PC-3 (cell line): ENCODE measurements at regions of chr3 and their contacts with region 1.

Region 1: GRCh38 chr3:97882975-97883598 is 61.3 kb downstream of the CRYBG3 start:
- DNase-seq: peak; percentile 92
- ATAC-seq: peak; percentile 92
- H3K4me3 ChIP-seq: peak overlapping the region; percentile 54
- H3K27ac ChIP-seq: peak overlapping the region; percentile 90
- H3K4me1 ChIP-seq: peaks cover 26% of the 10 kb centered on the region
- H3K27me3 ChIP-seq: no peaks in the 10 kb centered on the region
- CTCF ChIP-seq: no peak

Region 2: DNA sequence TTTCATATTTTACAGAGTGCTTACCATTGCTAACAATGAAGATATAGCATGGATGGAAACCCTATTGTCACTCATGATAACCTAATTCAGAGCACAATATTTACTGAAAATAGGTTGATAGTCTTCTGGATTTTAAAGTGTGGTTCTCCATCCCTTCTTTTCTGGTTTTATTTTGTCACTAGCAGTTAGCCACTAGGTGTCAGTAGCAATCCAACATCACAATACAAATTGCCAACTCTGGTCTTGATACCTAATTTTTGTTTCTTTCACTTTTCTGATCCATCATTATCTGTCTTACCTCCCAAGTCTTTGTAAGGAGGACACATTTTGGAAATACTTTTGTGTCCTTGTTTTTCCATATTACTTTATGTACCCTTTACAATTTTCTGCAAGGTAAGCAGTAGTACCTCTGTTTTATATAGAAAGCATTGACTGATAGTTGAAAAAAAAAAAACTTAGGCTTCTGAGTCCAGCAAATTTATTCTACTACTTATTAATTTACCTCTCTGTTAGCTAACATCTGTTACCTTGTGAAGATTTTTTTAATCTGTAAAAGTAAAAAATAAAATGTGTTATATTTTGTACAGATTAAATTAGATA is 89.6 kb before region 1 on chr3:
- CTCF ChIA-PET with region 1: no interaction called
- POLR2A ChIA-PET with region 1: no interaction called
- intact Hi-C with region 1: loop called (anchors 5 kb)
- DNase-seq: peak; percentile 71
- ATAC-seq: peak; percentile 60
- H3K4me3 ChIP-seq: no peak overlapping the region
- H3K27ac ChIP-seq: no peak overlapping the region
- H3K4me1 ChIP-seq: no peaks in the 10 kb centered on the region
- H3K27me3 ChIP-seq: no peaks in the 10 kb centered on the region
- CTCF ChIP-seq: peak; percentile 92

Region 3: GRCh38 chr3:97821810-97822775 is 61.0 kb before region 1 on chr3 and contains the start of gene CRYBG3:
- CTCF ChIA-PET with region 1: no interaction called
- POLR2A ChIA-PET with region 1: no interaction called
- intact Hi-C with region 1: loop called (anchors 1 kb)
- DNase-seq: peak; percentile 86
- ATAC-seq: peak; percentile 94
- H3K4me3 ChIP-seq: peak within 1 kb of the TSS; percentile 80
- H3K27ac ChIP-seq: no peak within 1 kb of the TSS
- H3K4me1 ChIP-seq: peaks cover 15% of the 10 kb centered on the region; the same call in 1 of the 2 replicates
- H3K27me3 ChIP-seq: no peaks in the 10 kb centered on the region
- CTCF ChIP-seq: peak; percentile 53
- total RNA-seq, gene CRYBG3: 11.4 and 12.2 TPM in 2 replicates

Region 4: DNA sequence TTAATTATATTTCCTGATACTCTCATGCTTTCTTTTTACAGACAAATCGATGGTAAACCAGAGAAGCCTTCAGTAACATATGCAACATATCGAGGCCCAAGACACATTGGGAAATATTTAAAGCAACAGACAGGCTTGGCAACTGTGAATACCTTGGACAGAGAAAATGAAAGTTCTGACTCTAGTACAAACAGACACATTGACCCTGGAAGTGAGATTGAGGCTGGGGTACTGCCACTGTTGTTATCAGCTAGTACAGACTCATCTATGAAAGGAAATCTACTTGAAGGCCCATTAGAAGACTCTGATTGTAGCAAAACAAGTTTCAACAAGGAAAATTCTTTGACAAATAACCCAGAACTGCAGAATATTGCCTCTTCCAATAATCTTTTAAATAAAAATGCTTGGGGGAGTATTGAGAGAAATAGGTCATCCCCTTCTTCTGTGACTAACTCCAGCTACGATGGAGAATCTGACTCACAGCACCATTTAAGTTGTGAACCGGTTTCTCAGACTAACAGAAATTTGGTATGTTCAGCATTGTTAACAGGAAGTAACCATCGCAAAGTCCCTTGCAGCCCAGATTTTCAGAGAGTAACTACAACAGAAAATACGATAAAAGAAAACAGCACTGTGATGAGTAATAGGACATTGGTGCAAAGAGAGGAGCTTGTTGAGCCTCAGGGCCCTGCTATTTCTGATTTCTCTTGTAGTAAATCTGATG is 11.1 kb before region 1 on chr3:
- CTCF ChIA-PET with region 1: no interaction called
- POLR2A ChIA-PET with region 1: no interaction called
- intact Hi-C with region 1: loop called (anchors 1 kb)
- DNase-seq: peak; percentile 98
- ATAC-seq: peak; percentile 96
- H3K4me3 ChIP-seq: peak overlapping the region; percentile 45; the same call in 1 of the 2 replicates
- H3K27ac ChIP-seq: peak overlapping the region; percentile 87
- H3K4me1 ChIP-seq: peaks cover 25% of the 10 kb centered on the region
- H3K27me3 ChIP-seq: no peaks in the 10 kb centered on the region
- CTCF ChIP-seq: no peak

Region 5: DNA sequence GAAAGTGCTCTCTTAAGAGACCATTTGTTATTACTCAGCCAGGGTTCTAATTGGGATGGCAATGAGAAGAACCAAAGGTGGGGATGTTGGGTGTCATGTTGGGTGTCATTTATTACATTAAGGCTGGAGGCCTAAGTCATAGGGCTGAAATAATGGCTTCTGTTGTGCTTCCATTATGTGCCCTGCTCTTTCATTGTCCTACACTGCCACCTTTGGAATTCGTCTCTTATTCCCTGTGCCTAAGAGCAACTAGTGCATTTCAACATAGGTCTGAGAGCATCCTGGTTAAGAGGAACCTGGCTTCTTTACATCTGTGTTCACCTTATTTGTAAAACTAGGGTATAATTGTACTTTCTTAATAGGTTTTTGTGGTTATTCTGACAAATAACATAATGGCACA is 56.9 kb after region 1 on chr3:
- CTCF ChIA-PET with region 1: no interaction called
- POLR2A ChIA-PET with region 1: no interaction called
- intact Hi-C with region 1: loop called (anchors 5 kb)
- DNase-seq: peak; percentile 19
- ATAC-seq: peak; percentile 67
- H3K4me3 ChIP-seq: no peak overlapping the region
- H3K27ac ChIP-seq: no peak overlapping the region
- H3K4me1 ChIP-seq: no peaks in the 10 kb centered on the region
- H3K27me3 ChIP-seq: no peaks in the 10 kb centered on the region
- CTCF ChIP-seq: peak; percentile 37; the same call in 1 of the 2 replicates

Region 6: DNA sequence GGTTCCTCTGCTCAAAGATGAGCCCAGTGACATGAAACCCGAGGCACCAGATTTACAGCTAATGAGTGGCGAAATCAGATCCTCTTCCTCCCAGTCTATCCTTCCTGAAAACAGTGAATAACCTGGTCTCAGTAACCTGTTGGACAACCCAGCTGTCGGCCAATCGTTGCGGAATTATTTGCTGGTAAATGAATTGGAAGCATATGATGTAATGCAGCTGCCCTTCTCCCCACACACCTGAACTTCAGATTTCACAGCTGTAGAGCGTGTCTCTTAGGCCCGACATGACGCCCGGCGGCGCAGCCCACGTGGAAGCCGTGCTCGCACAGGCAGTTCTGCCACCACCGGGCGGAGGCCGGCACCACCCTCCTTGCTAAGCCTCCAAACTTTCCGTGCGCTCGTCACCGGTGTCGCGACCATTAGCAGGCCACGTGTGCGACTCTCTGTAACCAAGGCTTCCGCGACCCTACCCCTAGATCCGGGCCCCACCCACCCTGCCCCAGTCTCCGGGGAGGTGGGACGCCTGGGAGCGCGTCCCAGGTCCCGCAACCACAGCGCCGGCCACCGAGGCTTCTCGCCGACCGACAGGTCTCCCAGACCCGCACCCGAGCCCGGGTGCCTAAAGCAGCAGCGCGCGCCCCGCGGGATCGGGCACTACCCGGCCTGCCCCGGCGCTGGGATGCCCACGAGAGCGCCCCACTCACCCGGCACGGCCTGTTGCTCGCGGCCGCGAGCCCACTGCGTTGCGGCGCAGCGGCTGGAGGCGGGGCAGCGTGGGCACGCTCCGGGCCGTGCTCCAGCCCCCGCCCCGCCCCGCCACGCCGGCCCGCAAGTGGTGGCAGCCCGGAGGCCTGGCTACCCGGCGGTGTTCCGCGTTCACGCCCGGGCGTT is 88.8 kb after region 1 on chr3 and contains the start of gene RIOX2:
- CTCF ChIA-PET with region 1: no interaction called
- POLR2A ChIA-PET with region 1: no interaction called
- intact Hi-C with region 1: loop called (anchors 5 kb)
- DNase-seq: peak; percentile 82
- ATAC-seq: peak; percentile 88
- H3K4me3 ChIP-seq: peak within 1 kb of the TSS; percentile 75
- H3K27ac ChIP-seq: peak within 1 kb of the TSS; percentile 40
- H3K4me1 ChIP-seq: peaks cover 22% of the 10 kb centered on the region
- H3K27me3 ChIP-seq: no peaks in the 10 kb centered on the region
- CTCF ChIP-seq: no peak
- total RNA-seq, gene RIOX2: 31.0 and 46.4 TPM in 2 replicates

Region 7: GRCh38 chr3:98522244-98523090 is 639.4 kb after region 1 on chr3 and contains the start of gene CLDND1:
- CTCF ChIA-PET with region 1: no interaction called
- POLR2A ChIA-PET with region 1: no interaction called
- intact Hi-C with region 1: loop called (anchors 5 kb)
- DNase-seq: peak; percentile 99
- ATAC-seq: peak; percentile 95
- H3K4me3 ChIP-seq: peak within 1 kb of the TSS; percentile 79
- H3K27ac ChIP-seq: peak within 1 kb of the TSS; percentile 91
- H3K4me1 ChIP-seq: peaks cover 21% of the 10 kb centered on the region
- H3K27me3 ChIP-seq: no peaks in the 10 kb centered on the region
- CTCF ChIP-seq: no peak
- total RNA-seq, gene CLDND1: 76.4 and 81.1 TPM in 2 replicates